ENCODE measurements at regions of chr6 and their contacts with region 1.

Region 1: DNA sequence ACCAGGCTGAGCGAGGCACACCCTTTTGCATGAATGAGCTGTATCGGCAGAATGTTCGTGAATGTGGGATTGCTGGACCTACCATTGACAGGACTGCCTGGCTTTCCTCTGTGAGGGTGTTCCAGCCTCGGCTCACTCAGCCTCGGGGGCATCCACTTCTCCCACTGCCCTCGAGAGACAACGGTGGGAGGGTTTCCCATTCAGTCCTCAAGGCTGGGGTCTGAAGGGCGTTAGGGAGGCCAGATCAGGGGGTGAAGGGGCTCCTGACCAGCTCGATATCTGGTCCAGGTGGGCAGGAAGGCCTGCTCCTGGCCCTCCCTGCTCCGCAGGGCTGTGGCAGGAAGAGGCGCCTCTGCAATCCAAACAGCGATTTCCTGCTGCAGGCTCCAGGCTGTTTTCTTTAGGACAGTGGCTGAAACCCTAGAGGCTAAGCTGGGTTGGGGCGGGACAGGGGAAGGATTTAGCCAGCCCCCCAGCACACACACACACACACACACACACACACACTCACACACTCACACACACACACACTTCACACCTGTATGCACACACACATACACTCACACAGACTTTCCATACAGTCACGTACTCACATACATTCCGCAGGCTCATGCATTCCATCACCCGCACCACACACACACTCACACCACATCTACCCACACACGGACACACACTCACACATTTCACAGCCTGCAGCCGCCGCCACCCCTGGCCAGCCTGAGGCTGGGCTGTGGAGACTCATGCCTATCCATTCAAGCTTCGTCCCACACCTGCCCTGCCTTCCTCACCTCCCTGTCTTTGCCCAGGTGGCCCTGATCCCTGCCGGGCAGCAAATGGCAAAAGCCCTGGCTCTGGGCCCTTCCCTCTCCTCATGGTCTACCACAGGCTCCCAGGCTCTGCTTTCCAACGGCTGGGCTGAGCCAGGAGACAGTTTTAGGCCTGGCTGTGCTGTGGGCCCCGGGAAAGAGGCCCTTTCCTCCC is 17.7 kb downstream of the MDFI start:
- DNase-seq: no peak
- ATAC-seq: no peak
- H3K4me3 ChIP-seq: no peak overlapping the region
- H3K4me3 Mint-ChIP-seq: no peak overlapping the region
- H3K27ac ChIP-seq: no peak overlapping the region
- H3K27ac Mint-ChIP-seq: no peak overlapping the region
- H3K4me1 ChIP-seq: no peaks in the 10 kb centered on the region
- H3K4me1 Mint-ChIP-seq: no peaks in the 10 kb centered on the region
- H3K27me3 ChIP-seq: peaks cover 0 to 62% of the 10 kb centered on the region in 2 experiments
- H3K27me3 Mint-ChIP-seq: peaks cover 15 to 42% of the 10 kb centered on the region in 2 donors

Region 2: GRCh38 chr6:41683510-41684310 is 27.7 kb after region 1 on chr6:
- CTCF ChIA-PET with region 1: interaction called in 1 of 2 experiments, 13 read pairs
- POLR2A ChIA-PET with region 1: no interaction called
- DNase-seq: peak; percentile 43 to 89 (median 72)
- ATAC-seq: peak; percentile 89 to 93 (median 91)
- H3K4me3 ChIP-seq: peak overlapping the region; percentile 48 to 60
- H3K4me3 Mint-ChIP-seq: peak overlapping the region; percentile 77 to 80 (median 80)
- H3K27ac ChIP-seq: peak overlapping the region; percentile 7
- H3K27ac Mint-ChIP-seq: peak overlapping the region; percentile 72 to 82
- H3K4me1 ChIP-seq: peaks cover 0 to 21% of the 10 kb centered on the region in 2 experiments
- H3K4me1 Mint-ChIP-seq: peaks cover 8 to 18% (median 13%) of the 10 kb centered on the region in 3 donors
- H3K27me3 ChIP-seq: peaks cover 0 to 19% of the 10 kb centered on the region in 2 experiments
- H3K27me3 Mint-ChIP-seq: peaks cover 0 to under 1% of the 10 kb centered on the region in 2 donors

Region 3: GRCh38 chr6:42148058-42148457 is 492.1 kb after region 1 on chr6:
- CTCF ChIA-PET with region 1: no interaction called
- POLR2A ChIA-PET with region 1: interaction called in 1 of 2 experiments, 15 read pairs
- DNase-seq: no peak
- ATAC-seq: no peak
- H3K4me3 ChIP-seq: no peak overlapping the region
- H3K4me3 Mint-ChIP-seq: no peak overlapping the region
- H3K27ac ChIP-seq: no peak overlapping the region
- H3K27ac Mint-ChIP-seq: no peak overlapping the region
- H3K4me1 ChIP-seq: no peaks in the 10 kb centered on the region
- H3K4me1 Mint-ChIP-seq: no peaks in the 10 kb centered on the region
- H3K27me3 ChIP-seq: peaks cover 3 to 26% of the 10 kb centered on the region in 2 experiments
- H3K27me3 Mint-ChIP-seq: peaks cover 15 to 18% of the 10 kb centered on the region in 2 donors

Measured in T-cell (primary cell).